Activated naive CD4-positive, alpha-beta T cell treated with anti-CD3 and anti-CD28 coated beads, Interleukin-2, amount 10 ng/mL, durations not matched to agents 7 days and 5 days (primary cell): ENCODE measurements at regions of chr7 and their contacts with region 1.

Region 1: GRCh38 chr7:100705753-100706671 is at the start of gene POP7:
- DNase-seq: peak; percentile 99
- H3K4me3 Mint-ChIP-seq: peak within 1 kb of the TSS; percentile 98
- H3K27ac Mint-ChIP-seq: peak within 1 kb of the TSS; percentile 96
- H3K4me1 Mint-ChIP-seq: peaks cover 14% of the 10 kb centered on the region
- H3K27me3 Mint-ChIP-seq: peaks cover 15% of the 10 kb centered on the region

Region 2: GRCh38 chr7:100586266-100587025 is 119.6 kb before region 1 on chr7 and contains the start of gene FBXO24:
- CTCF ChIA-PET with region 1: interaction called, 18 read pairs
- DNase-seq: peak; percentile 100
- H3K4me3 Mint-ChIP-seq: peak within 1 kb of the TSS; percentile 89
- H3K27ac Mint-ChIP-seq: peak within 1 kb of the TSS; percentile 98
- H3K4me1 Mint-ChIP-seq: peaks cover 36% of the 10 kb centered on the region
- H3K27me3 Mint-ChIP-seq: peaks cover 30% of the 10 kb centered on the region

Region 3: GRCh38 chr7:100632951-100633717 is 72.9 kb before region 1 on chr7:
- CTCF ChIA-PET with region 1: interaction called, 10 read pairs
- DNase-seq: peak; percentile 78
- H3K4me3 Mint-ChIP-seq: peak overlapping the region; percentile 79
- H3K27ac Mint-ChIP-seq: peak overlapping the region; percentile 70
- H3K4me1 Mint-ChIP-seq: peaks cover 52% of the 10 kb centered on the region
- H3K27me3 Mint-ChIP-seq: peaks cover 55% of the 10 kb centered on the region

Region 4: DNA sequence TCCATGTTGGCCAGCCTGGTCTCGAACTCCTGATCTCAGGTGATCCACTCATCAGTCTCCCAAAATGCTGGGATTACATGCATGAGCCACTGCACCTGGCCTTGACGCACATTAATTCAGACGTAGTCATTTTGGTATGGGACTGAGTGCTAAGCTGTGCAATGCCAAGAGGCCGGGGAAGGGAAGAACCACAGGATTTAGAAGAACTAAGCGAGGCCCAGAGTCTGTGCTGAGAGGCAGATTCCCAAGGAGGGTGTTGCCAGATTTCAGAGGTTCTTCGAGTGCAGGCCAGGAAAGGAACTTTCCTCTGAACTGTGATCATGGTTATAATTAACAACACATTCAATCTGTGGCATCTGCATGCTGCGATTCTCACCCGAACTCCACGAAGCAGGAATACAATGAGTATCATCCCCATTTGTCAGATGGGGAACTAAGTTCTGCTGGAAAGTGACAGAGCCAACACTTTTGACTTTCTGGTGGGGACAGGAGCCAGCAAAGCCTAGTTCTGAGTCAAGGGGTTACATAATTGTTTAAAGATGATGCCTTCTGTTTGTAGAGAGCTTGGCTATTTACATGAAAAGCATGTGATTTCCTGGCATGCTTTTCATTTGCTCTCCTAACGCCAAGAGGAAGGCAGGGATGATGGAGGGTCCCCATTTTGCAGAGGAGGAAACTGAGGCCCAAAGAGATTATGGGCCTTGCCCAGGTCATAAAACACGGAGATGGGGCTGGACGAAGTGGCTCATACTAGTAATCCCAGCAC is 21.2 kb after region 1 on chr7:
- CTCF ChIA-PET with region 1: interaction called, 50 read pairs
- DNase-seq: no peak
- H3K4me3 Mint-ChIP-seq: no peak overlapping the region
- H3K27ac Mint-ChIP-seq: no peak overlapping the region
- H3K4me1 Mint-ChIP-seq: peaks cover 3% of the 10 kb centered on the region
- H3K27me3 Mint-ChIP-seq: peaks cover 62% of the 10 kb centered on the region

Region 5: DNA sequence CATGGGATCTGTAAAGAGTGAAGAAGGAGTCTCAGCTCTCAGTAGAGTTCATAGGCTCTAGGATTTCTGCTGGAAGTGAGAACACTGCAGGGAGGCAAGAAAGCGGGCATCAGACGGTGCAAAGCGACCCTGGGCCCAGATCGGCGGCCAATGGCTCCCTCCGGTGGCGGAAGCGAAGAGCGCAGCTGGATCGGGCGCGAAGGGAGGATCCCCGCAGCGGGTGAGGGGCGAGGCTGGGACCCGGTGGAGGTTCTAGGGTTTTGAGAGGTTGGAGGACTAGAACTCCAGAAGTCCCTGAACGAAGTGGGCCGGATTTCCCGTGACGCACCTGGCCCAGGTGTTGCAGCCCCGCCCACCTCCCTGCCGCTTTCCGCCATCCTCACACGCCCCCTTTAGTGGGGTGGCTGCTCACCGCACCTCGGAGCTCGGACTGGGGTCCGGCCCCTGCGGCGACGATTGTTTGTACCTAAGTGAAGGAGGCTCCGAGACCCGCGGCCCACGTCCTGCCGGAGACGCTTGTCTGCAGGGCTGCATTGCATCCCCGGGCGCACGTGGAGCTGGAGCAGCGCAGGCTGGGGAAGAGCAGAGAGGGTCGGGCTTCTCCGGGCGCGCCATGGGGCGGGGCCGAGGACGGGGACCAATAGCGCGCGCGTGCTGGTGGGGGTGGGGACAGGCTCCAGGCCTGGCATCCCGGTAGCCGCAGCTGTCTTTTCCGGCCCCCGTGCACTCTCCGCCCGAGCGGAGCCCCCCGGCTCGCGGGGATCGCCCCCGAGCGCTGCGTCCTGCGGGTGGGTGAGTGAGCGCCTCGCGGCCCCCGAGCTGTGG is 146.2 kb after region 1 on chr7 and contains the start of gene SLC12A9:
- CTCF ChIA-PET with region 1: interaction called, 64 read pairs
- DNase-seq: peak; percentile 93
- H3K4me3 Mint-ChIP-seq: peak within 1 kb of the TSS; percentile 96
- H3K27ac Mint-ChIP-seq: peak within 1 kb of the TSS; percentile 89
- H3K4me1 Mint-ChIP-seq: peaks cover 20% of the 10 kb centered on the region
- H3K27me3 Mint-ChIP-seq: no peaks in the 10 kb centered on the region

Region 6: GRCh38 chr7:100867040-100867775 is 161.2 kb after region 1 on chr7 and contains the start of gene TRIP6:
- CTCF ChIA-PET with region 1: no interaction called
- DNase-seq: peak; percentile 73
- H3K4me3 Mint-ChIP-seq: peak within 1 kb of the TSS; percentile 88
- H3K27ac Mint-ChIP-seq: peak within 1 kb of the TSS; percentile 93
- H3K4me1 Mint-ChIP-seq: peaks cover 29% of the 10 kb centered on the region
- H3K27me3 Mint-ChIP-seq: no peaks in the 10 kb centered on the region